ENCODE measurements at regions of chr2 and their contacts with region 1.

Region 1: GRCh38 chr2:235135990-235136561 is 184.3 kb downstream of the SH3BP4 start:
- DNase-seq: peak; percentile 84 to 91
- H3K4me3 ChIP-seq: no peak overlapping the region
- H3K27ac ChIP-seq: no peak overlapping the region
- H3K4me1 ChIP-seq: peaks cover 0 to 4% (median 0%) of the 10 kb centered on the region in 4 donors
- H3K27me3 ChIP-seq: no peaks in the 10 kb centered on the region
- CTCF ChIP-seq: peak in 5 of 7 experiments; percentile 48 to 82 (median 77)
- EP300 ChIP-seq: no peak
- POLR2A ChIP-seq: no peak

Region 2: DNA sequence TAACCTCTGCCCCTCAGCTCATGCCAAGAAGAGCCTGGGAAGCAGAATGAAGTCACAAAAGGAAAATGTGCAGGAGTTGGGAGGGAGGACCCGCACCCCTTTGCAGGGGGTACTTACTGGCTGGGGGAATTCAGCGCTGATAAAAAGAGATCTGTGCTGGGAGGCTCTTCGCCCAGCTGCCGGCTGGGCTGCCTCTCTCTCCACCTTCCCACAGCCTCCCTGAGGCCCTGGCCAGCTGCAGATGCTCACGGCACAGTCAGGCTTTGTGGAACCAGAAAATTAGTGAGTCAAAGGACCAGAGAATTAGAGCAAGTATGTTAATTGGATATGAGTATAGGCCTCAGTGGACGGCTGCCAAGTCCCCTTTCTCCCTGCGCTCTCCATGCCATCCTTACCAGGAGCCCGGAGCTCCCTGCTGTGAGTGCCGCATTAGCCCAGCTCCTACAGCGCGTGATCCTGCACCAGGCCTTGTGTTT is 366.0 kb before region 1 on chr2:
- intact Hi-C with region 1: no loop called
- DNase-seq: peak in 1 of 2 donors; percentile 38
- H3K4me3 ChIP-seq: no peak overlapping the region
- H3K27ac ChIP-seq: no peak overlapping the region
- H3K4me1 ChIP-seq: no peaks in the 10 kb centered on the region
- H3K27me3 ChIP-seq: no peaks in the 10 kb centered on the region
- CTCF ChIP-seq: no peak
- EP300 ChIP-seq: no peak
- POLR2A ChIP-seq: no peak

Region 3: DNA sequence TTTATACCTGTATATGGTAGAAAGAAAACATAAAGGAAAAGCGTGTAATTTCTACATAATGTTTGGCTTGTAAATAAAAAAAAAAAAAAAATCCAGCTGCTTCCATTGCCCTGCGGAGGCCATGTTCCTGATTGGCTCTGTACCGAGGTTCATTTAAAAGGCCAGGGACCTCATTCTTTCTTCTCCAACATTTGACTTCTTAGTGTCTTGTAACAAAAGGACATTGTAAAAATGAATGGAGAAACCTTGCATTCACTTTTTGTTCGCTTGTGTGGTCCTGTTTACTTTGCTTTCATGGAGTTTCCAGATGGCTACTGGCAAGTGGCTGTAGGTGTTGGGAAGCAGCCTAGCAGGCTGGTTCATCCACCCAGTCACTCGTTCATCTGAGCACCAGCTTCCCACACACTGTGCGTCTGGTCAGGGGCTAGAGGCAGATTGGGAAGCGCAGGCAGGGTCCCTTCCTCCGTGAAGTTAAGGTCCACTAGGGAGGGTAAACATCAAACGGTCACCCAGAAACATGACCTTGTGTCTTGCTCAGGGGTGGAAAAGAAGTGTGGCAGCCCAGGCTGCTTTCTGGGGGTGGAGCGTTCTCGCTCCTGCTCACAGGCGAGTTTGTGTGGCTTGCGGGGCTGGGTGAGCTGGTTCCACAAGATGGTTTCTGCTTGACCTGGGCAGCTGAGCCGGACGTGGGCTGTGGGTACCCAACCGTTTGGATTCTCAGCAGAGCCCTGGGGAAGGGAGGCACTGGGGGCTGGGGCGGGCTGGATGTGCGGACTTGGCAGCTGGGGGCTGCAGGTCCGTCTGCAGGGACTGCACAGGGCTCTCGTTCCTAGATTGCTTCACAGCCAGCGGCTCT is 618.5 kb after region 1 on chr2:
- intact Hi-C with region 1: loop called (anchors 5 kb)
- DNase-seq: peak in 1 of 2 donors; percentile 37
- H3K4me3 ChIP-seq: no peak overlapping the region
- H3K27ac ChIP-seq: no peak overlapping the region
- H3K4me1 ChIP-seq: peaks cover 0 to 4% (median 0%) of the 10 kb centered on the region in 4 donors
- H3K27me3 ChIP-seq: no peaks in the 10 kb centered on the region
- CTCF ChIP-seq: no peak
- EP300 ChIP-seq: no peak
- POLR2A ChIP-seq: no peak

Measured in stomach (tissue), 19 donors.